WTC11 (cell line): ENCODE measurements at regions of chr1 and their contacts with region 1.

Region 1: GRCh38 chr1:201254625-201255506 is 28.4 kb upstream of the PKP1 start:
- DNase-seq: peak; percentile 96
- ATAC-seq: peak; percentile 81
- H3K4me3 Mint-ChIP-seq: no peak overlapping the region
- H3K27ac Mint-ChIP-seq: no peak overlapping the region
- H3K4me1 Mint-ChIP-seq: peaks cover 5% of the 10 kb centered on the region; the same call in 1 of the 2 replicates
- H3K27me3 Mint-ChIP-seq: no peaks in the 10 kb centered on the region; the same call in 1 of the 2 replicates
- CTCF ChIP-seq: peak; percentile 99

Region 2: DNA sequence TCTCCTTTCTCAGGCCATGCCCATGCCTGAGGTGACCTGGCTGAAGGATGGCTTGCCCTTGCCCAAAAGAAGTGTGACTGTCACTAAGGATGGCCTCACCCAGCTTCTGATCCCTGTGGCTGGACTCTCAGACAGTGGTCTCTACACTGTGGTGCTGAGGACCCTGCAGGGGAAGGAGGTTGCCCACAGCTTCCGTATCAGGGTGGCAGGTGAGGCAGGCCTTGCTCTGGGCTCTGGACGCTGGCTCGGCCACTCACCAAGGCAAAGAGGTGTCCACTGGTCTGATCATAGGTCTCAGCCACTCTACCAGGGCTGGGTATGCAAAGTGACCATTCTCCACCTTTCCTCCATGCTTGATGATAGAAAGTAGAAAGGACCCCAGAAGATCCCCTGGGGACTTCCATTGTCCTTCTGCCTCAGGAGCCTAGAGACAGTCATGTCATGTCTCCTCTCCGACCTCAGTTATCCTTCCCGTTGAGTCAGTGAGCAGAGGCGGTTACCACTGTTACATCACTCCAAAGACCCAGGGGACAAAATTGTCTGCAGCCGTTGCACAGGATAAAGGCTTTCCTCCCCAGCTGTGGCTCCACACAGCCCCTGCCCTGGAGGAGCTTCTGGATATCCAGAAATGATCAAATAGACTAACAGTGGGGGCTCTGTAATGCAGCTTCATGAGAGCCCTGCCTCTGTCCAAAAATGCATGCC is 30.0 kb before region 1 on chr1:
- CTCF ChIA-PET with region 1: interaction called, 12 read pairs
- POLR2A ChIA-PET with region 1: no interaction called
- DNase-seq: no peak
- ATAC-seq: no peak
- H3K4me3 Mint-ChIP-seq: no peak overlapping the region
- H3K27ac Mint-ChIP-seq: no peak overlapping the region
- H3K4me1 Mint-ChIP-seq: no peaks in the 10 kb centered on the region
- H3K27me3 Mint-ChIP-seq: peaks cover 5% of the 10 kb centered on the region
- CTCF ChIP-seq: no peak

Region 3: GRCh38 chr1:201282931-201283829 is 28.3 kb after region 1 on chr1 and contains the start of gene PKP1:
- CTCF ChIA-PET with region 1: interaction called, 10 read pairs
- POLR2A ChIA-PET with region 1: no interaction called
- DNase-seq: peak; percentile 44
- ATAC-seq: peak; percentile 83
- H3K4me3 Mint-ChIP-seq: peak within 1 kb of the TSS; percentile 63
- H3K27ac Mint-ChIP-seq: no peak within 1 kb of the TSS
- H3K4me1 Mint-ChIP-seq: peaks cover 13% of the 10 kb centered on the region
- H3K27me3 Mint-ChIP-seq: peaks cover 45% of the 10 kb centered on the region
- CTCF ChIP-seq: no peak
- total RNA-seq, gene PKP1: 0.18 to 0.41 TPM (median 0.24 TPM) in 3 replicates

Region 4: DNA sequence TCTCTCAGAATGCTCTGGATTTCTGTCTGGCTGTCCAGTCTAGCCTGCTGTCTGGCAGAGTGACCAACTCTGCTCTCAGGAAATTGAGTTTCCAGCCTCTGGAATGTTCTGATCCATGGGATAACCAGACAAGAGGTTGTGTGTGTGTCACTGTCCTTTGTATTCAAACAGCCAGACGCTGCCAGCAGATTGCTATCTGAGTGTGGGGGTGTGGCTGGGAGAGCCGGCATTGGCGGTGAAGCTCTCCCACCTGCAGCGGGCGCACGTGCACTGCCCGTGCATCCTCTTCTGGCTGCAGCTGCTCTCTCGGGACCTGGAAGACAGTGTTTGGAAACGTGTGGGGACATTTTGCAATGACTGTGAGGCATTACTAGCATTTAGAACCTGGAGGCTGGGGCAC is 54.6 kb after region 1 on chr1:
- CTCF ChIA-PET with region 1: interaction called, 16 read pairs
- POLR2A ChIA-PET with region 1: no interaction called
- DNase-seq: peak; percentile 78
- ATAC-seq: peak; percentile 92
- H3K4me3 Mint-ChIP-seq: no peak overlapping the region
- H3K27ac Mint-ChIP-seq: no peak overlapping the region
- H3K4me1 Mint-ChIP-seq: peaks cover 12% of the 10 kb centered on the region
- H3K27me3 Mint-ChIP-seq: peaks cover 32% of the 10 kb centered on the region
- CTCF ChIP-seq: no peak

Region 5: GRCh38 chr1:201376464-201377374 is 121.9 kb after region 1 on chr1:
- CTCF ChIA-PET with region 1: interaction called, 23 read pairs
- POLR2A ChIA-PET with region 1: interaction called, 5 read pairs
- DNase-seq: peak; percentile 86
- ATAC-seq: peak; percentile 81
- H3K4me3 Mint-ChIP-seq: peak overlapping the region; percentile 58
- H3K27ac Mint-ChIP-seq: peak overlapping the region; percentile 98
- H3K4me1 Mint-ChIP-seq: peaks cover 54% of the 10 kb centered on the region
- H3K27me3 Mint-ChIP-seq: peaks cover 7% of the 10 kb centered on the region; the same call in 1 of the 2 replicates
- CTCF ChIP-seq: peak; percentile 56

Region 6: GRCh38 chr1:201488817-201489589 is 234.1 kb after region 1 on chr1:
- CTCF ChIA-PET with region 1: no interaction called
- POLR2A ChIA-PET with region 1: no interaction called
- DNase-seq: no peak
- ATAC-seq: no peak
- H3K4me3 Mint-ChIP-seq: no peak overlapping the region
- H3K27ac Mint-ChIP-seq: no peak overlapping the region
- H3K4me1 Mint-ChIP-seq: peaks cover 9% of the 10 kb centered on the region
- H3K27me3 Mint-ChIP-seq: no peaks in the 10 kb centered on the region
- CTCF ChIP-seq: no peak